Naive thymus-derived CD8-positive, alpha-beta T cell (primary cell): ENCODE measurements at regions of chr2 and their contacts with region 1.

Region 1: DNA sequence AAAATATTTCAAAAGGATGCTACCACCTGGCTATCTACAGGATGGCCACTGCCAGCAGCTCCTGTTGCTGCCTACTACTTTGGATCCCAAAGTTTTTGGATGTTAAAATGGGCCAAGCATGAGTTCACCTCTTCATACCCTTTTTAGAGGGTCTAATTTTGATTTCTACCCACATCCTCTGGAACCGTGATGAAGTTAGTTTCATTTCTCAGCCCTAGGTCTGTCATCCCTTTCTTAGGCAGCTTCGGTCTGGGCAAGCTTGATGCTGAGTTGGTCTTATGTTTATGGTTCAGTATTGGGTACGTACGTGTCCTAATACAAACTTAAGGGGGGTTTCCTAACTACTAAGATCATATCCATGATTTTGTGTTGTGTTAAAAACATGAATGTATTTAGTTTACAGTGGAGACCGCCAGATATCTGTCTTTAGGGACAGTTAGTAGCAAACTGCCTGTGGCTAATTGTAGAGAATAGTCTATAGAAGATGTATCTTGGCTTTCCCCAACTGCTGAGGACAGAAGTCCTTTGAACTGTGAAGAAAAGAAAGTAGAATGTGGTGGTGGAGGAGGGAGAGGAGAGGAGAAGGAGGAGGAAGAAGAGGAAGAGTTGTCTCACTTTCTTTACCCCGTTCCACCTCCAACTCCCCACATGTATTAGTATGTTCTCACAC is 184.9 kb downstream of the UBE2E3 start:
- DNase-seq: peak in 3 of 10 donors; percentile 25 to 56 (median 39)
- ATAC-seq: peak; percentile 88 to 89
- H3K4me3 Mint-ChIP-seq: peak overlapping the region; percentile 54 to 85 (median 78)
- H3K27ac Mint-ChIP-seq: peak overlapping the region; percentile 90 to 99 (median 96)
- H3K4me1 Mint-ChIP-seq: peaks cover 21 to 66% (median 62%) of the 10 kb centered on the region in 4 donors
- H3K27me3 Mint-ChIP-seq: no peaks in the 10 kb centered on the region

Region 2: GRCh38 chr2:180924063-180924462 is 241.3 kb before region 1 on chr2:
- POLR2A ChIA-PET with region 1: no interaction called
- DNase-seq: no peak
- ATAC-seq: no peak
- H3K4me3 Mint-ChIP-seq: no peak overlapping the region
- H3K27ac Mint-ChIP-seq: no peak overlapping the region
- H3K4me1 Mint-ChIP-seq: no peaks in the 10 kb centered on the region
- H3K27me3 Mint-ChIP-seq: peaks cover 2 to 18% (median 7%) of the 10 kb centered on the region in 5 donors

Region 3: GRCh38 chr2:181123798-181124231 is 41.5 kb before region 1 on chr2:
- POLR2A ChIA-PET with region 1: interaction called, 11 read pairs
- DNase-seq: peak; percentile 8 to 89 (median 78)
- ATAC-seq: peak; percentile 90 to 98
- H3K4me3 Mint-ChIP-seq: peak overlapping the region; percentile 61 to 91 (median 81)
- H3K27ac Mint-ChIP-seq: peak overlapping the region; percentile 96 to 100 (median 98)
- H3K4me1 Mint-ChIP-seq: peaks cover 23 to 74% (median 65%) of the 10 kb centered on the region in 4 donors
- H3K27me3 Mint-ChIP-seq: no peaks in the 10 kb centered on the region

Region 4: GRCh38 chr2:181130686-181131085 is 34.6 kb before region 1 on chr2:
- POLR2A ChIA-PET with region 1: interaction called, 12 read pairs
- DNase-seq: no peak
- ATAC-seq: no peak
- H3K4me3 Mint-ChIP-seq: peak overlapping the region; percentile 67 to 90 (median 83)
- H3K27ac Mint-ChIP-seq: peak overlapping the region; percentile 90 to 100 (median 96)
- H3K4me1 Mint-ChIP-seq: peaks cover 27 to 61% (median 57%) of the 10 kb centered on the region in 4 donors
- H3K27me3 Mint-ChIP-seq: no peaks in the 10 kb centered on the region

Region 5: DNA sequence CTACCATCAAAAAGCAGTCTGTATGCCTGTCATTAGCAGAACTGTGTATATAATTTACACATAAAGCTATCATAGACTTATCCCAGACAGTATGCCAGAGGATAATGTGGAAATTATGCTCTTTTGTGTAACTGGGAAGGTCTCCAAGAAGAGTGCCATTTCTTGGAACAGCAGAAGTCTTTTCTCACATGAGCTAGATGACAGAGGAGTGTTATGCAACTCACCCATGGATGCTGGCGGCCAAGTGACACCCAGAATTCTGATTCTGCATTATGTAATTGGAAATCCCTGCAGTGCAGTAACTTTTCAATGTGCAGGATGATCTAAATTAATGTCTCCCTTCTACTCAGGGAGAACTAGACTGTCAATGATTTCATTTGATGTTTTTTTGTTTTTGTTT is 24.9 kb before region 1 on chr2:
- POLR2A ChIA-PET with region 1: interaction called, 11 read pairs
- DNase-seq: peak in 1 of 10 donors; percentile 14
- ATAC-seq: peak; percentile 12 to 13
- H3K4me3 Mint-ChIP-seq: peak overlapping the region in 9 of 10 donors; percentile 49 to 92 (median 77)
- H3K27ac Mint-ChIP-seq: peak overlapping the region; percentile 93 to 99 (median 96)
- H3K4me1 Mint-ChIP-seq: peaks cover 31 to 79% (median 70%) of the 10 kb centered on the region in 4 donors
- H3K27me3 Mint-ChIP-seq: no peaks in the 10 kb centered on the region

Region 6: GRCh38 chr2:181581534-181581933 is 416.2 kb after region 1 on chr2:
- POLR2A ChIA-PET with region 1: no interaction called
- DNase-seq: no peak
- ATAC-seq: no peak
- H3K4me3 Mint-ChIP-seq: no peak overlapping the region
- H3K27ac Mint-ChIP-seq: no peak overlapping the region
- H3K4me1 Mint-ChIP-seq: peaks cover 6 to 10% (median 9%) of the 10 kb centered on the region in 4 donors
- H3K27me3 Mint-ChIP-seq: peaks cover 0 to 14% (median 4%) of the 10 kb centered on the region in 5 donors